Heart left ventricle (tissue), 16 donors: ENCODE measurements at regions of chr5 and their contacts with region 1.

Region 1: DNA sequence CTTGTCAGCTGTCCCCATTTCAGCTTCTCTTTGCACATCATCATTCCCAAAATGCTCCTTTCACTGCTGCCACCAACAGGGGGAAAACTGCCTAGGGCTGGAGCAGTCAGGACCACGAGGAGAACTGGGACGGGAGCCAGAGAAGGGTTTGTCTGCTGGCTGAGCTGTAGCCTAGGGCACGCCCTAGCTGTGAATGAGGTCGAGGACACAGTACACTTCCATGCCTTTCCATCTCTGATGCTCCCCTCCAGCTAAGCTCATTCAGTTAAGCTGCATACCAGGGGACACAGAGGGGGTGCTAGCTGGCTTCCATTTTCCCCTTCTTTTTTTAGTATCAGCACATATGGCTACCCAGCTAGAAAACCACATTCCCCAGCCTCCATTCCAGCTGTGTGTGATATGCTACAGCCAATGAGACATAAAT is 64.7 kb downstream of the STK10 start:
- DNase-seq: peak; percentile 76 to 92 (median 88)
- ATAC-seq: peak; percentile 93 to 96 (median 94)
- H3K4me3 ChIP-seq: no peak overlapping the region
- H3K27ac ChIP-seq: no peak overlapping the region
- H3K4me1 ChIP-seq: peaks cover 0 to 28% (median 16%) of the 10 kb centered on the region in 12 donors
- H3K27me3 ChIP-seq: no peaks in the 10 kb centered on the region
- CTCF ChIP-seq: peak; percentile 22 to 64 (median 48)
- POLR2A ChIP-seq: no peak

Region 2: DNA sequence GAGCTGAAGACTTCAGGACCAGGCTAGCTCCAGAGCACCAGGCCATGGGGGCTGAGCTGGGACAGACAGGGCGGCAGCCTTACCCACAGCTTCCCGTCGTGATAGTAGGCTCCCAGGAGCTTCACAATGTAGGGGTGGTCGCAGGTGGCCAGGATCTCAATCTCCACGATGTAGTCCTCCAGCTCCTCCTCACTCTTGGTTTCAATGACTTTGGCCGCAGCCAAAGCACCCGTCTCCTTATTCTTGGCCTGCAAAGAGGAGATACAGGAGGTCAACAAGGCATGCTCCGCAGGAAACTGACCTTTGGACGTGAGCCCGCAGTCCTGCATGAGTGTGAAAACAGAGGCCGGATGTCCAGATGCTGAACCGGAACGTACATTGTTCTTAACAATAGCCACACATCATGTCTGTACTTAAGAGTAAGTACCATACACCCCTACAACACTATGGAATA is 33.3 kb after region 1 on chr5:
- intact Hi-C with region 1: loop called in 2 of 10 experiments (anchors 5 kb)
- DNase-seq: peak in 4 of 5 donors; percentile 74 to 83 (median 78)
- ATAC-seq: peak; percentile 78 to 96 (median 80)
- H3K4me3 ChIP-seq: no peak overlapping the region
- H3K27ac ChIP-seq: peak overlapping the region in 11 of 12 donors; percentile 19 to 73 (median 45)
- H3K4me1 ChIP-seq: peaks cover 0 to 75% (median 16%) of the 10 kb centered on the region in 12 donors
- H3K27me3 ChIP-seq: no peaks in the 10 kb centered on the region
- CTCF ChIP-seq: no peak
- POLR2A ChIP-seq: no peak

Region 3: DNA sequence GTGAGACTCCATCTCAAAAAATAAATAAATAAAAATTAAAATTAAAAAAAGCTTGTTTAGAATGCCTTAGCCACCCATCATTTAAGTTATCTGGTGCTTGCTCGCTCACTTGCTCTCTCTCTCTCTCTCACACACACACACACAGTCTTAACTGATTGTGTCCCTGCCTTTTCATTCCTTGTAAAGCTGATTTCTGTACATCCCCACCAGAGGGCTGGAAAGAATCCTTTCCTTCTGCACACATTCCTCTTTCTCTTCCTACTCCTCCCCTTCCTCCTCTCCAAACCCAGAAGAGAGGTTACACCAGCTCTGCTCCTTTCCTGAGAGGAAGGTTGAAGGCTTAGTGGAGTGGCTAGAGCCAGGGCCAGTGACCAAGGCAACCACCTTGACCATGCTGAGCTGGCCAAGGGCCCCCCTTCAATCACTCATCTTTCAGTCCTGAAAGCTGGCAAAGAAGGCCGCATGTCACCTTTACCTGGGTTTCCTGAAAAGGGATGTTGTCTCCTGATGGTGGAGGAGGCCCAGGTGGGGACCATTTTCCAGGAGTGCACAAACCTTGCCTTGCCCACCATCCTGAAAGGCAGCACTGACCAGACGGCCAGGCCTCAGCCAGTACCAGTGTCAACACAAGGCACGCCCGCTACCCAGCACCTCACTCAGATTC is 39.2 kb after region 1 on chr5:
- intact Hi-C with region 1: loop called in 2 of 10 experiments (anchors 5 kb)
- DNase-seq: no peak
- ATAC-seq: no peak
- H3K4me3 ChIP-seq: no peak overlapping the region
- H3K27ac ChIP-seq: peak overlapping the region in 1 of 12 donors; percentile 48
- H3K4me1 ChIP-seq: peaks cover 11 to 62% (median 28%) of the 10 kb centered on the region in 12 donors
- H3K27me3 ChIP-seq: no peaks in the 10 kb centered on the region
- CTCF ChIP-seq: no peak
- POLR2A ChIP-seq: no peak

Region 4: DNA sequence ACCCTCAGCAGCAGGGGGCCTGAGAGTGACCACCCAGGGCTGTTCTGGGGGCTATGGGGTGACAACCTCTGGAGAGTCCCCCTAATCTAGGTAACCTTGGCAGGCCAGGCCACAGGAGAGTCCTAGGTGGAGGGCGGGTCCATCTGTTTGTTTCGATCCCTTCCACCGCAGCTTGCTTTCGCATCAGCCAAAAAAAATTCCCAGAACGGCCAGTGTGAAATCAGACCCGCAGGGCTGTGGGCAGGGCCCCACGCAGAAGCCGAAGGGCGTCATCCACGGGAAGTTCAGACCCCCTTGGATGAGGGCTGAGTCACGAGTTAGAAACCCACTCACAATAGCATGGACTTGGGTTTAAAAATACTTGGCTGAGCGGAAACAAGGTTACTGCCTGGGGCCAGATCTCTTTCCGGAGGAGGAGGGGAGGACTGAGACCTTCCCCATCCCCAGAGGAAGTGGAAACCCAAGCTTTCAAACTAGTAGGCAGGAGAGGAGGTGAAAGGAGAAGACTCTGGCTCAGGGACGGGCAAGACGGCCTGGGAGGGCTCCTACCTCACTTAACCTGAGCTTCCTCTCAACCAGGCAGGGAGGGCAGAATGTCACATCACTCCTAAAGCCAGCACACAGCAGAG is 56.2 kb after region 1 on chr5:
- intact Hi-C with region 1: loop called in 1 of 10 experiments (anchors 5 kb)
- DNase-seq: peak in 4 of 5 donors; percentile 35 to 67 (median 58)
- ATAC-seq: peak; percentile 19 to 84 (median 55)
- H3K4me3 ChIP-seq: peak overlapping the region in 10 of 12 donors; percentile 9 to 46 (median 25)
- H3K27ac ChIP-seq: peak overlapping the region; percentile 52 to 93 (median 80)
- H3K4me1 ChIP-seq: peaks cover 6 to 95% (median 40%) of the 10 kb centered on the region in 12 donors
- H3K27me3 ChIP-seq: no peaks in the 10 kb centered on the region
- CTCF ChIP-seq: no peak
- POLR2A ChIP-seq: no peak